Psoas muscle (tissue), 8 donors: ENCODE measurements at regions of chr6 and their contacts with region 1.

Region 1: GRCh38 chr6:25556516-25556915 is 95.5 kb upstream of the SCGN start:
- DNase-seq: peak; percentile 70 to 81
- ATAC-seq: no peak
- H3K4me3 ChIP-seq: no peak overlapping the region
- H3K27ac ChIP-seq: no peak overlapping the region
- H3K4me1 ChIP-seq: no peaks in the 10 kb centered on the region
- H3K27me3 ChIP-seq: no peaks in the 10 kb centered on the region
- CTCF ChIP-seq: peak; percentile 60

Region 2: GRCh38 chr6:25229671-25230321 is 326.7 kb before region 1 on chr6:
- intact Hi-C with region 1: loop called in 1 of 2 experiments (anchors 5 kb)
- DNase-seq: no peak
- ATAC-seq: no peak
- H3K4me3 ChIP-seq: no peak overlapping the region
- H3K27ac ChIP-seq: no peak overlapping the region
- H3K4me1 ChIP-seq: no peaks in the 10 kb centered on the region
- H3K27me3 ChIP-seq: no peaks in the 10 kb centered on the region
- CTCF ChIP-seq: no peak